H1 (cell line): ENCODE measurements at regions of chr3 and their contacts with region 1.

Region 1: GRCh38 chr3:134794950-134795745 is at the start of gene EPHB1:
- DNase-seq: peak; percentile 92 to 97
- H3K4me3 ChIP-seq: peak within 1 kb of the TSS; percentile 46 to 73 (median 67)
- H3K27ac ChIP-seq: no peak within 1 kb of the TSS
- H3K4me1 ChIP-seq: peaks cover 3 to 17% (median 12%) of the 10 kb centered on the region in 4 experiments; a peak in 6 of 7 replicates
- H3K27me3 ChIP-seq: peaks cover 14 to 42% (median 33%) of the 10 kb centered on the region in 4 experiments
- CTCF ChIP-seq: peak; percentile 82 to 89 (median 85)
- EP300 ChIP-seq: no peak
- POLR2A ChIP-seq: peak in 1 of 2 experiments; percentile 90; a peak in 2 of 3 replicates
- RAD21 ChIP-seq: peak; percentile 99
- total RNA-seq, gene EPHB1: 5.9 TPM in 2 replicates

Region 2: DNA sequence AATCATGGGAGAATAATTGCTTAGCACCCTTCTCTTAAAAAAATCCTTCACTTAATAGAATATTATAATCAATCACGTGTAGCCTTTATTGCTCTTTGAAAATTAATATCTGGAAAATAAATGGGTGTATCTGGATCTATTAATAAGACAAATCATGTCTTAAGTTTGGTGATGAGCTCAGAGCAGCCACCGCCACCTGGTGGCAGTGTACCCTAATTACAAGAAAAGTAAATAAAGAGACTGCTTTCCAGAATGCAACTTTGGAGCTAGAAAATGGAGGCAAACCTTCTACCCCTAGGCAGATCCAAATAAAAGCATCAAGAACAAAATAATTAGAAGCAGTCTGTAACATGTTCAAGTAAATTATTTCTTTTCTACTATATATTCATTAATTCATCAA is 43.5 kb after region 1 on chr3:
- CTCF ChIA-PET with region 1: interaction called, 84 read pairs
- POLR2A ChIA-PET with region 1: interaction called, 3 read pairs
- DNase-seq: no peak
- H3K4me3 ChIP-seq: no peak overlapping the region
- H3K27ac ChIP-seq: no peak overlapping the region
- H3K4me1 ChIP-seq: no peaks in the 10 kb centered on the region
- H3K27me3 ChIP-seq: no peaks in the 10 kb centered on the region
- CTCF ChIP-seq: peak in 2 of 3 experiments; percentile 39 to 45; a peak in 2 of 4 replicates
- EP300 ChIP-seq: no peak
- POLR2A ChIP-seq: no peak
- RAD21 ChIP-seq: peak; percentile 49 to 64

Region 3: GRCh38 chr3:134978658-134979057 is 183.5 kb after region 1 on chr3:
- CTCF ChIA-PET with region 1: interaction called, 11 read pairs
- POLR2A ChIA-PET with region 1: no interaction called
- DNase-seq: no peak
- H3K4me3 ChIP-seq: no peak overlapping the region
- H3K27ac ChIP-seq: no peak overlapping the region
- H3K4me1 ChIP-seq: no peaks in the 10 kb centered on the region
- H3K27me3 ChIP-seq: no peaks in the 10 kb centered on the region
- CTCF ChIP-seq: peak in 2 of 3 experiments; percentile 12 to 27; a peak in 2 of 4 replicates
- EP300 ChIP-seq: no peak
- POLR2A ChIP-seq: no peak
- RAD21 ChIP-seq: peak; percentile 3 to 25; a peak in 1 of 4 replicates

Region 4: GRCh38 chr3:135007607-135008006 is 212.5 kb after region 1 on chr3:
- CTCF ChIA-PET with region 1: no interaction called
- POLR2A ChIA-PET with region 1: no interaction called
- DNase-seq: no peak
- H3K4me3 ChIP-seq: no peak overlapping the region
- H3K27ac ChIP-seq: no peak overlapping the region
- H3K4me1 ChIP-seq: no peaks in the 10 kb centered on the region
- H3K27me3 ChIP-seq: no peaks in the 10 kb centered on the region
- CTCF ChIP-seq: no peak
- EP300 ChIP-seq: no peak
- POLR2A ChIP-seq: no peak
- RAD21 ChIP-seq: no peak

Region 5: DNA sequence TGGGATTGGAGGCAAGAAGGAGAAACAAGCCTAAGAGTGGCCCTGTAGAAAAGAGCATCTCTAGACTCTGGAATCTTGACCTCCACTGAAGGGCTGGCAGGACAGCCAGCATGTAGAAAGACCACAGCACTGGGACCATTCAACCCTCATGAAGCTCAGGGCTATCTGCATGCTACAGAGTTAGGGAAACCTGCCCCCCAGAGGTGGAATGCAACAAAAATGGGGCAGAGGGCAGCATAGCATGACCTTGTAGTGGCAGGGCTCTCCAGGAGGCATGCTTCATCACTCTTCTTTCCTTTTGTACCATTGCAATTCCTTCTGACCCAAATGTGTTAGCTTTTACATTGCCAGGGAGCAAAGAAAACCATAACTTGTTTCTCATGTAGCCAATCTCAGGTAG is 445.3 kb after region 1 on chr3:
- CTCF ChIA-PET with region 1: interaction called, 25 read pairs
- POLR2A ChIA-PET with region 1: no interaction called
- DNase-seq: no peak
- H3K4me3 ChIP-seq: no peak overlapping the region
- H3K27ac ChIP-seq: no peak overlapping the region
- H3K4me1 ChIP-seq: peaks cover 0 to 7% (median 0%) of the 10 kb centered on the region in 4 experiments; a peak in 3 of 7 replicates
- H3K27me3 ChIP-seq: no peaks in the 10 kb centered on the region; a peak in 1 of 7 replicates
- CTCF ChIP-seq: peak; percentile 60 to 66 (median 64)
- EP300 ChIP-seq: no peak
- POLR2A ChIP-seq: no peak
- RAD21 ChIP-seq: peak; percentile 75 to 84

Region 6: DNA sequence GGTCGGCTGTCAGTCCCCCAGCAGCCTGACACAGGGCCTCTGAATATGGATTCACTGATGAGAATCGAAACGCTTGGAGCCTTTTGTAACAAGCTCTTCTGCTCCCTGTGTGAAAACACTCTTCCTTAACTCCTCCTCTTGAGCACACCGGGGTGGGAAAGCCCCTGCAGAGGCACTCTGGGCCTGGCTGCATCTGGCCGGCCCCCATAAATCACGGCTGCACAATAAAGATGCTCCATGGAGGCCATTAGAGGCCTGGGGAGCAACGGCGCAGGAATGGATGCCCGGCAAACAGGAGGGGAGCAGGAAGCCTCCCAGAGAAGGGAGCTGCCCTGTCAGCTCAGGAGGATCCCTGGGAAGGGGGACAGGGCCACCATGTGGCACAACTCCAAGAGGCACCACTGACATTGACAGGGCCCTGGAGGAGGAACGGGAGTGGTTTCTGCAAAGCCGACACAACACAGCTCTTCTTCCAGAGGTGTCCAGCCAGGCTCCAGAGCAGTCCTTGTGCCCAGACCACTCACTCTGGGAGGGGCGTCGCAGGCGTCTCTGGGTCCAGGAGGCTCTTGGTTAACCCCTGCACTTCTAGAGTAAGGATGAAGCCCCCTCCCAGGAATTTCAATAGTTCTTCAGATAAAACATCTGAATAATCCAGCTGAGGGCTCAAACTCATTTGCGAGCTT is 661.1 kb after region 1 on chr3:
- CTCF ChIA-PET with region 1: interaction called, 11 read pairs
- POLR2A ChIA-PET with region 1: no interaction called
- DNase-seq: peak; percentile 47 to 63
- H3K4me3 ChIP-seq: no peak overlapping the region
- H3K27ac ChIP-seq: no peak overlapping the region
- H3K4me1 ChIP-seq: peaks cover 0 to 5% (median 4%) of the 10 kb centered on the region in 4 experiments; a peak in 3 of 7 replicates
- H3K27me3 ChIP-seq: no peaks in the 10 kb centered on the region
- CTCF ChIP-seq: peak; percentile 70 to 76 (median 74)
- EP300 ChIP-seq: no peak; a peak in 1 of 3 replicates
- POLR2A ChIP-seq: no peak
- RAD21 ChIP-seq: peak; percentile 90 to 95